ENCODE measurements at regions of chr1 and their contacts with region 1.

Region 1: DNA sequence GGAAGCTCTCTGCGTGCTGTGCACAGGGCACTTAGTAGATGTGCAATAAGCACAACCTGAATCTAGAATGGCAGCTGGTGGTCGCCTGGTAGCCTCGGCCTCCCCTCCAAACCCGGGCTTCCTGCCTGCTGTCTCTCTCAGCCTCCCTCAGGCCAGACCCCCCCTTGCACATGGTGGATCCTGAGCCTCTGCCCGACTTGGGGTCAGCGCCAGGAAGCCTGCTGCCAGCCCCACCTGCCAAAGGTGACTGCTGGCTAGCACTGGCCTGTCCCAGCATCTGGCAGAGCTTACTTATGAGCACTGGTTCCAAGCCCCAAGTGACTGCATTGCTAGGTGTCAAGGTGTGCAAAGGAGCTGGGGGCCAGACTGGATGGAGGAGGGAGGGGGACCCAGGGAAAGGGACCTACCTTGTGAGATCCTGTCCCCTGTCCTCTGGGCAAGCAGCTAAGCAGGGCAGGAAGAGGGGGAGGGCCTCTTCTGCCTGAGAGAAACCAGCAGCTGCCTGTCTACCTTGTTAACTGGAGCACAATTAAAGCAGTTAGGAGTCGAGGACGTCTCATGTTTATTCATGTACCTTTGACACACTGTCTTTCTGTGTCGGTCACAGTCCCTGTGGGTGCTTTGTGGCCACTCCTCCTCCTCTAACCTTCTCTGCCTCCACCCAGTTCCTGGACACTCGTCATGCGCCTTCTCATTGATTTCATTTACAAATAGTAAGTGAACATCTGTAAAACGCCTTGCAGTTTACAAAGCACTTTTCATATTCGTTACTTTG is 100.9 kb downstream of the DDX20 start:
- DNase-seq: no peak
- H3K4me3 ChIP-seq: no peak overlapping the region
- H3K27ac ChIP-seq: no peak overlapping the region
- H3K4me1 ChIP-seq: no peaks in the 10 kb centered on the region
- H3K27me3 ChIP-seq: peaks cover 6% of the 10 kb centered on the region
- CTCF ChIP-seq: no peak

Region 2: DNA sequence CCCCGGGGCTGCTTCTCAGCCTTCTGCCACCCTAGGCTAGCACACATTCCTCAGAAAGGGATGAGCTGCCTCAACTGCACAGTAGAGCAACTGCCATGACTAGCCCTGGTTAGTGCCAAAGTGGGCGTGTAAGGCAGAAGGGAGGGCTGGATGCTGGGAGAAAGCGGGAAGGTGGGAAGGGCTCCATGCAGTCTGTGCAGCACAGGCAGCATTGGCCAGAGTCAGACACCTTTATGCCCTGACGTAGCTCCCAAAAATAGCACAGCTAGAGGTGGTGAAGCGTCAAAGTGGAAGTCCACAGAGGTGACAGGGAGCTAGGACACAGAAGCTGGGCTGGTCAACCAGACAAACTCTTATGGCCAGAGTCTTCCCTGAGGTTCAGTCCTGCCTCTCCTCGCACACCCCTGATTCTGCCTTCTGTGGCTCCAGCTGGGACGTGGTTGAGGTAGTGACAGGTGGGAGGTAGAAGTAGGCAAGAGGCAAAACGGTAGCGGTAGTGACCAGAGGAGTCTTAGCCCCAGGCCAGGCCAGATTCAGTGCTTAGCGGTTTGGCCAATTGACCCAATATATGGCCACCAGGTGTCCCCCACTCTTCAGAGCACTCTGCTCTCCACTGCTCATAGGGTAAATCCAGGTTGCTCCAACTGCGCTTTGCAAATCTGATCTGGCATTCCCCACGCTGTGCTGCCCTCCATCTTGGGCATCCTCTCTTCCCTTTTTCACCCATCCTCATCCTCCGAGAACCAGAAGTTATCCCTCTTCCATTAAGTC is 55.3 kb before region 1 on chr1:
- CTCF ChIA-PET with region 1: no interaction called
- dilution Hi-C with region 1: loop called (anchors 5 kb)
- in situ Hi-C with region 1: no loop called
- intact Hi-C with region 1: no loop called
- DNase-seq: no peak
- H3K4me3 ChIP-seq: no peak overlapping the region
- H3K27ac ChIP-seq: no peak overlapping the region
- H3K4me1 ChIP-seq: no peaks in the 10 kb centered on the region
- H3K27me3 ChIP-seq: no peaks in the 10 kb centered on the region
- CTCF ChIP-seq: peak in 1 of 2 donors; percentile 16

Region 3: DNA sequence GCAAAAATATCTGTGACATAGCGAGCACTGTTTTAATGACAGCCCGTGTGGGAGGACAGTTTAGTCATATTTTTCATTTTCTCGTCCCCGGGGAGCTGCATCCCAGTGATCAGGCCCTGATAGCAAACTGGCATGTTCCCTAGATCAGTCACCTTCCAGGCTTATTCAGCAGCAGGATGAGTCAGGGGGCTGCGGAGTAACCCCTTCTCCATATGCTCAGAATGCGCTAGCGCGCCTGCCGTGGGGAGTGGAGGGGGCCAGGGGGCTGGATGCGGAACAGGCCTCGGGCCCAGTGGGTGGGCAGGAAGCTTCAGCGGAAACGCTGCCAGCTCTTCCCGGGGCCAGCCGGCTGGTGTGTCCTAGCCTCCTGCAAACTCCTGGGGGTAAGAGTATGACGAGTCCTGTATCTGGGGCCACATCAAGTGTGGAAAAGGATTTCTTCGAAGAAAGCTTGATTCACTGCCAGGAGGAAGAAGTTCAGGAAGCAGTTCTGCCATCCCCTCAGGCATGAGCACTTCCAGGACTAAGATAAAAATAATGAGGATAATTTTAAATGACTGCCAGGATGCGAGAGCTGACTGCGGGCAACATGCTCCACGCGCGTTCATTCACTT is 39.0 kb after region 1 on chr1:
- CTCF ChIA-PET with region 1: no interaction called
- dilution Hi-C with region 1: loop called (anchors 5 kb)
- in situ Hi-C with region 1: no loop called
- intact Hi-C with region 1: no loop called
- DNase-seq: no peak
- H3K4me3 ChIP-seq: no peak overlapping the region
- H3K27ac ChIP-seq: no peak overlapping the region
- H3K4me1 ChIP-seq: no peaks in the 10 kb centered on the region
- H3K27me3 ChIP-seq: no peaks in the 10 kb centered on the region
- CTCF ChIP-seq: no peak

Region 4: GRCh38 chr1:111955755-111956154 is 99.2 kb after region 1 on chr1:
- CTCF ChIA-PET with region 1: no interaction called
- dilution Hi-C with region 1: loop called (anchors 5 kb)
- in situ Hi-C with region 1: no loop called
- intact Hi-C with region 1: no loop called
- DNase-seq: peak; percentile 23
- H3K4me3 ChIP-seq: no peak overlapping the region
- H3K27ac ChIP-seq: no peak overlapping the region
- H3K4me1 ChIP-seq: peaks cover 10% of the 10 kb centered on the region
- H3K27me3 ChIP-seq: no peaks in the 10 kb centered on the region
- CTCF ChIP-seq: no peak

Region 5: GRCh38 chr1:111990878-111991718 is 134.5 kb after region 1 on chr1:
- CTCF ChIA-PET with region 1: no interaction called
- dilution Hi-C with region 1: no loop called
- in situ Hi-C with region 1: no loop called
- intact Hi-C with region 1: no loop called
- DNase-seq: peak; percentile 57
- H3K4me3 ChIP-seq: peak overlapping the region; percentile 32 to 52 (median 48)
- H3K27ac ChIP-seq: no peak overlapping the region
- H3K4me1 ChIP-seq: peaks cover 18% of the 10 kb centered on the region
- H3K27me3 ChIP-seq: peaks cover 5% of the 10 kb centered on the region
- CTCF ChIP-seq: peak; percentile 43 to 60

Measured in mammary epithelial cell (primary cell).